ENCODE measurements at regions of chr7 and their contacts with region 1.

Region 1: GRCh38 chr7:7761340-7761980 is 43.1 kb upstream of the RPA3 start:
- DNase-seq: no peak
- H3K4me3 Mint-ChIP-seq: peak overlapping the region; percentile 88
- H3K27ac Mint-ChIP-seq: peak overlapping the region; percentile 83
- H3K4me1 Mint-ChIP-seq: peaks cover 32% of the 10 kb centered on the region
- H3K27me3 Mint-ChIP-seq: no peaks in the 10 kb centered on the region

Region 2: GRCh38 chr7:7640221-7641128 is 121.0 kb before region 1 on chr7 and contains the start of gene UMAD1:
- CTCF ChIA-PET with region 1: interaction called, 5 read pairs
- POLR2A ChIA-PET with region 1: no interaction called
- intact Hi-C with region 1: loop called (anchors 5 kb)
- DNase-seq: peak; percentile 99
- H3K4me3 Mint-ChIP-seq: peak within 1 kb of the TSS; percentile 97
- H3K27ac Mint-ChIP-seq: peak within 1 kb of the TSS; percentile 100
- H3K4me1 Mint-ChIP-seq: peaks cover 45% of the 10 kb centered on the region
- H3K27me3 Mint-ChIP-seq: peaks cover 1% of the 10 kb centered on the region
- total RNA-seq, gene UMAD1: 15.0 to 17.6 TPM

Region 3: GRCh38 chr7:7719236-7719635 is 42.2 kb before region 1 on chr7:
- CTCF ChIA-PET with region 1: interaction called, 5 read pairs
- POLR2A ChIA-PET with region 1: interaction called, 7 read pairs
- intact Hi-C with region 1: loop called (anchors 1 kb)
- DNase-seq: peak; percentile 62
- H3K4me3 Mint-ChIP-seq: peak overlapping the region; percentile 8
- H3K27ac Mint-ChIP-seq: peak overlapping the region; percentile 45
- H3K4me1 Mint-ChIP-seq: peaks cover 17% of the 10 kb centered on the region
- H3K27me3 Mint-ChIP-seq: no peaks in the 10 kb centered on the region

Region 4: DNA sequence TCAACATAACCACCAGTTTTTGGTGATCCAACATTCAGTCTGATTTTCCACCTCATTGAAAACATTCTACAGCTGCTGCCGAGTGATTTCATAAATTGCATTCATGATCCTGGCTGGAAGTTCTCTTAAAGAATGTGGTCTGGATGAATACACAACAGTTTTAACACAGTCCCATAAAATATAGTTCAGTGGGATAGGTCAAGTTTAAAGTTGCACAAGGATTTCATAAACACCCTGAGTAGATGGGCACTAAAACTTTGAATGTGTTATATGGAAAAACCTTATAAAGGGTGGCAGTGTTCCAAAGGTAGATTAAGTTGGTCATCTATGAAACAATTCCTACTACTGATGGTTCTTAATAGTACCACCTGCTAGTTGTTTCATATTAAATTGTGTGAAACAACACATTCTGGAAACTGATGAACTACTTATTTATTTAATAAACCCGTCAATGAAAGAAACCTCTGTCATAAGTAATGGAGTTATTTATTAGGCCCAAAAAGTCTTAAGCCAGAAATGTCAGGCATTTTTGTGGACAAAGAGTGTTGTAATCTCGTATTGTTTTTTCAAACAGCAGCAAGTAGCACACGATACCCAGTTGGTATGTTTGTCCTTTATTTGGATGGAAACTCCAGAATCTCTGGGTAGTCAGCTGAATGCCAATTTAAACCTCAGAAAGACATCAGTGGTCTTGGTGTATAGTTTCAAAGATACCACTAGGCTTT is 28.7 kb before region 1 on chr7:
- CTCF ChIA-PET with region 1: no interaction called
- POLR2A ChIA-PET with region 1: no interaction called
- intact Hi-C with region 1: no loop called
- DNase-seq: no peak
- H3K4me3 Mint-ChIP-seq: no peak overlapping the region
- H3K27ac Mint-ChIP-seq: no peak overlapping the region
- H3K4me1 Mint-ChIP-seq: no peaks in the 10 kb centered on the region
- H3K27me3 Mint-ChIP-seq: no peaks in the 10 kb centered on the region

Region 5: GRCh38 chr7:7911371-7912155 is 150.1 kb after region 1 on chr7:
- CTCF ChIA-PET with region 1: no interaction called
- POLR2A ChIA-PET with region 1: no interaction called
- intact Hi-C with region 1: no loop called
- DNase-seq: no peak
- H3K4me3 Mint-ChIP-seq: no peak overlapping the region
- H3K27ac Mint-ChIP-seq: no peak overlapping the region
- H3K4me1 Mint-ChIP-seq: no peaks in the 10 kb centered on the region
- H3K27me3 Mint-ChIP-seq: no peaks in the 10 kb centered on the region

Region 6: GRCh38 chr7:8035647-8036518 is 274.4 kb after region 1 on chr7:
- CTCF ChIA-PET with region 1: interaction called, 4 read pairs
- POLR2A ChIA-PET with region 1: no interaction called
- intact Hi-C with region 1: loop called (anchors 5 kb)
- DNase-seq: no peak
- H3K4me3 Mint-ChIP-seq: no peak overlapping the region
- H3K27ac Mint-ChIP-seq: peak overlapping the region; percentile 43
- H3K4me1 Mint-ChIP-seq: peaks cover 25% of the 10 kb centered on the region
- H3K27me3 Mint-ChIP-seq: no peaks in the 10 kb centered on the region

Region 7: DNA sequence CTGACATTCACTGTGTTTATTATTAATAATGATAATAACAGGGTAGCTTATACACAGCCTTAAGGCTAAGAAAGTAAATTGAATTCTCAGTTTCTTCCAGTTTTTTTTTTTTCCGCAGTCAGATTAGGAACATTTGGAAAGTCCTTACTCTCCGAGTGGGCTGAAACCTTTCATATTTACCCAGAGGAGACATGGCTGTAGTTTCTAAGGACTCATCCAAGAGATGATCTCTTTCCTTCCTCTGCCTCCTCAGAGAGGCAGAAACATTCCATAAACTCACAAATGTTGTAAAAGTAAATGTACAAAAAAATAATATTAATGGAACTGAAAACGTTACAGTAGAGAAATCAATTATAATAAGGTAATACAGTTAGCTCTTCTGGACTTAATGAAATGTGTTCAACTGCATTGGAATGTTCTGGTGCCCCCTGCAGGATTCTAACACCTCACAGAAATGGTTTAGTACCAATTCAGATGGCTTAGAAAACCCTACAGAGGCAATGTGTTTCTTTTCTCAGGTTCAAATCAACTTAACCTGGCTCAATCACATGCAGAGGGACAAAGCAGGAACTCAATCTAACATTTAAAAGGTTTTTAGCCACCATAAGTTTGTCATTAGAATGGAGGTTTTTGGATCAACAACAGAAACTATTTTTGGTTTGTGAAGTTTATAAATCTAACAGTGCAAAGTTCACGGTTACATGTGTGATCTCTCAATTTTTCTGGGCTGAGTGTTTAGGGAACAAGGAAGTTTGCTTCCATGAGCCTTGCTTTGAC is 428.8 kb after region 1 on chr7:
- CTCF ChIA-PET with region 1: interaction called, 5 read pairs
- POLR2A ChIA-PET with region 1: no interaction called
- intact Hi-C with region 1: loop called (anchors 5 kb)
- DNase-seq: peak; percentile 63
- H3K4me3 Mint-ChIP-seq: no peak overlapping the region
- H3K27ac Mint-ChIP-seq: no peak overlapping the region
- H3K4me1 Mint-ChIP-seq: peaks cover 13% of the 10 kb centered on the region
- H3K27me3 Mint-ChIP-seq: no peaks in the 10 kb centered on the region

Region 8: DNA sequence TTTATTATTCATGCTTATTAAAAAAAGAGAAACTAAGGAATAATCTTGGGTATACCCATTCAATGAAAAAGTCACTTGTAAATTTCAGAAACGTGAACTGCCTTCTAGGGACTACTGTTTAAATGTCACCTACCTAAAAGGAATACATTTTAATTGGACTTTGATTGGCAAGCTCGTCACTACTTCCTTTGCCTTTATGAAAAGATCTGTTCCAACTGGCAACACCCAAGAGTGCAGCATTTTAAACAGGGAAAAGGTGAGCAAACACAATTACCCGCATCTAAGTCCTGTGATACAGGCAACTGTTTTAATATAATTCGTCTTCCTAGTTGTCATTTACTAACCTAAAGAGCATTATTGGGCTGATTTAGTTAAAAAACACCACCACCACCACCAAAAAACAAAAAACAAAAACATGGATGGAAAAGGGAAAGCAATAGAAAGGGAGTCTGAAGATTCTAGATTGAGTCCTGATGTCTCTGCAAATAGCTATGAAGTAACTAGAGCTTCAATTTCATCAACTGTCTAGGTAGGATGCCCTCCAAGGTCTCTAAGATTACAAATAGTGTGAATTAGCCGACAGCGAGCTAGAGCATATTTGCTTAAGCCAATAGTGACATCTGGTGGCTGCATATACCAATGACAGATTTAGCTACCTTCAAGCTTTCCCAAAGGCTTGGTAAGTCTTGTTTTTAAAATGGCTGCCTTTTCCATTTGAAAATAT is 534.3 kb after region 1 on chr7:
- CTCF ChIA-PET with region 1: no interaction called
- POLR2A ChIA-PET with region 1: no interaction called
- intact Hi-C with region 1: loop called (anchors 5 kb)
- DNase-seq: peak; percentile 20
- H3K4me3 Mint-ChIP-seq: no peak overlapping the region
- H3K27ac Mint-ChIP-seq: no peak overlapping the region
- H3K4me1 Mint-ChIP-seq: peaks cover 2% of the 10 kb centered on the region
- H3K27me3 Mint-ChIP-seq: peaks cover 9% of the 10 kb centered on the region

Measured in activated CD4-positive, alpha-beta memory T cell treated with anti-CD3 and anti-CD28 coated beads for 36 hours (primary cell).